Naive thymus-derived CD4-positive, alpha-beta T cell (primary cell): ENCODE measurements at regions of chr2 and their contacts with region 1.

Region 1: DNA sequence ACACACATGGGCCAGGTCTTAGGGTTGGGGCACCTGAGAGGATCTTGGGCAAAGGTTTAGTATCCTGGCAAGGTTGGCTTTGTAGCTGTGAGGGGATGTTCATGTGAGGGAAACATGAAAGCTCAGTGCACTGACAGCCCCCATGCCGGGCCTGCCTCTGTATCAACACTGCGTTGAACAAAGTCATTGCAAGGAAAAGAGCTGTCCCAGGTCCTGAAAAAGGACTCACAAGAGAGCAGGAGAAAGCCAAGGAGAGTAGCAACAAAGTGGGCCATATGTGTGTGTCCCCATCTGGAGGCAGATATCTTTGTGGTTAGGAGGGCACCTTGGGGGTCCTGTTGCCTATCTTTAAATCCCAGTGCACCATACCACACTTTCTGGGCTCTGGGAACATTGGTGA is 237.8 kb upstream of the THSD7B start:
- DNase-seq: no peak
- ATAC-seq: no peak
- H3K4me3 ChIP-seq: no peak overlapping the region
- H3K4me3 Mint-ChIP-seq: no peak overlapping the region
- H3K27ac ChIP-seq: no peak overlapping the region
- H3K27ac Mint-ChIP-seq: no peak overlapping the region
- H3K4me1 ChIP-seq: no peaks in the 10 kb centered on the region
- H3K4me1 Mint-ChIP-seq: no peaks in the 10 kb centered on the region
- H3K27me3 ChIP-seq: no peaks in the 10 kb centered on the region
- H3K27me3 Mint-ChIP-seq: peaks cover 0 to 24% (median 18%) of the 10 kb centered on the region in 5 donors

Region 2: GRCh38 chr2:136582628-136583205 is 55.2 kb after region 1 on chr2:
- CTCF ChIA-PET with region 1: no interaction called
- POLR2A ChIA-PET with region 1: no interaction called
- intact Hi-C with region 1: loop called in 1 of 2 experiments (anchors 5 kb)
- DNase-seq: peak in 2 of 9 donors; percentile 2 to 25
- ATAC-seq: no peak
- H3K4me3 ChIP-seq: no peak overlapping the region
- H3K4me3 Mint-ChIP-seq: no peak overlapping the region
- H3K27ac ChIP-seq: no peak overlapping the region
- H3K27ac Mint-ChIP-seq: no peak overlapping the region
- H3K4me1 ChIP-seq: no peaks in the 10 kb centered on the region
- H3K4me1 Mint-ChIP-seq: no peaks in the 10 kb centered on the region
- H3K27me3 ChIP-seq: no peaks in the 10 kb centered on the region
- H3K27me3 Mint-ChIP-seq: peaks cover 0 to 24% (median 7%) of the 10 kb centered on the region in 5 donors